Panc1 (cell line): ENCODE measurements at regions of chr6 and their contacts with region 1.

Region 1: GRCh38 chr6:15399641-15400470 is 154.0 kb downstream of the JARID2 start:
- DNase-seq: no peak
- ATAC-seq: peak; percentile 68
- H3K4me3 ChIP-seq: peak overlapping the region; percentile 36 to 52
- H3K27ac ChIP-seq: peak overlapping the region; percentile 44; the same call in 1 of the 2 replicates
- H3K4me1 ChIP-seq: peaks cover 21% of the 10 kb centered on the region
- H3K27me3 ChIP-seq: no peaks in the 10 kb centered on the region
- CTCF ChIP-seq: no peak

Region 2: GRCh38 chr6:14584450-14584849 is 815.4 kb before region 1 on chr6:
- CTCF ChIA-PET with region 1: no interaction called
- POLR2A ChIA-PET with region 1: interaction called, 17 read pairs
- in situ Hi-C with region 1: no loop called
- intact Hi-C with region 1: no loop called
- DNase-seq: no peak
- ATAC-seq: no peak
- H3K4me3 ChIP-seq: no peak overlapping the region
- H3K27ac ChIP-seq: no peak overlapping the region
- H3K4me1 ChIP-seq: no peaks in the 10 kb centered on the region
- H3K27me3 ChIP-seq: no peaks in the 10 kb centered on the region
- CTCF ChIP-seq: peak; percentile 6; the same call in 1 of the 2 replicates

Region 3: GRCh38 chr6:14734416-14735340 is 665.2 kb before region 1 on chr6:
- CTCF ChIA-PET with region 1: no interaction called
- POLR2A ChIA-PET with region 1: no interaction called
- in situ Hi-C with region 1: no loop called
- intact Hi-C with region 1: no loop called
- DNase-seq: no peak
- ATAC-seq: no peak
- H3K4me3 ChIP-seq: no peak overlapping the region
- H3K27ac ChIP-seq: no peak overlapping the region
- H3K4me1 ChIP-seq: no peaks in the 10 kb centered on the region
- H3K27me3 ChIP-seq: no peaks in the 10 kb centered on the region; the same call in 1 of the 2 replicates
- CTCF ChIP-seq: no peak

Region 4: GRCh38 chr6:15464211-15464725 is 64.4 kb after region 1 on chr6:
- CTCF ChIA-PET with region 1: no interaction called
- POLR2A ChIA-PET with region 1: no interaction called
- in situ Hi-C with region 1: no loop called
- intact Hi-C with region 1: no loop called
- DNase-seq: peak; percentile 25
- ATAC-seq: 0 out of 2 replicates have a peak, but pooled peaks have one; percentile 62
- H3K4me3 ChIP-seq: no peak overlapping the region
- H3K27ac ChIP-seq: no peak overlapping the region
- H3K4me1 ChIP-seq: no peaks in the 10 kb centered on the region
- H3K27me3 ChIP-seq: no peaks in the 10 kb centered on the region
- CTCF ChIP-seq: peak; percentile 84